ENCODE measurements at regions of chr7 and their contacts with region 1.

Region 1: GRCh38 chr7:148972375-148972774 is 55.9 kb downstream of the PDIA4 start:
- DNase-seq: no peak
- H3K4me3 ChIP-seq: no peak overlapping the region
- H3K27ac ChIP-seq: no peak overlapping the region
- H3K4me1 ChIP-seq: no peaks in the 10 kb centered on the region
- H3K27me3 ChIP-seq: no peaks in the 10 kb centered on the region
- CTCF ChIP-seq: no peak
- EP300 ChIP-seq: no peak
- POLR2A ChIP-seq: no peak

Region 2: GRCh38 chr7:148447221-148447849 is 525.0 kb before region 1 on chr7:
- in situ Hi-C with region 1: no loop called
- intact Hi-C with region 1: no loop called
- DNase-seq: no peak
- H3K4me3 ChIP-seq: no peak overlapping the region
- H3K27ac ChIP-seq: peak overlapping the region; percentile 56 to 65 (median 62)
- H3K4me1 ChIP-seq: peaks cover 0 to 25% (median 11%) of the 10 kb centered on the region in 4 donors
- H3K27me3 ChIP-seq: no peaks in the 10 kb centered on the region
- CTCF ChIP-seq: no peak
- EP300 ChIP-seq: no peak
- POLR2A ChIP-seq: no peak

Region 3: DNA sequence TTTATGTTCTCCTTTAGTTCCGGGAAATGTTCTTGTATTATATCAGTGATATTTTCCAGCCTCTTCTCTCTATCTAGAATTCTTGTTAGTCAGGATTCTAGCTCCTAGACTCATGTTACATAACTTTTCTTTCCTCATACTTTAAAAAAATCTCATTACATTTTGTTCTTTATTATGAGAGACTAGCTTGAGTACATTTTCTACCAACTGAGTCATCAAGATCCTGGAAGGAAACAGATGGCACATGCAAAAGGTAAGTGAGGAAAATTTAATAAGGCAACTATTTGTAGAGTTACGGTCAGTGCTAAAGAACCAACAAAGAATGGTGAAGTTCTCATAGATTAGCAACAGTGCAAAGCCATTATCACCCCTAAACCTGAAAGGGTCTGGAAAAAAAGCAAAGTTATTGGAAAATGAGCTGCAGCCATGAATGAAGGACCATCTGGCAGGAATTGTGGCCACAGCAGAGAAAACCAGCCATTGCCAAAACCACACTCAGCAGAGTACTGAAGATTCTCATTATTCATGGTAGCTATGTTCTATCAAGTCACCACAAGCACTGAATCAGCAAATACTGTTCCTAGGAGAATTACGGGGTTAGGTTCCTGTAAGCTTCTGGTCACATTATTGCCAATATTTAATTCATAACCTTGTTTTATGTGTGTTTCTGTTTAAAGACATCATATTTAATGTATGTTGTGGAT is 480.1 kb before region 1 on chr7:
- in situ Hi-C with region 1: no loop called
- intact Hi-C with region 1: loop called (anchors 5 kb)
- DNase-seq: no peak
- H3K4me3 ChIP-seq: no peak overlapping the region
- H3K27ac ChIP-seq: no peak overlapping the region
- H3K4me1 ChIP-seq: no peaks in the 10 kb centered on the region
- H3K27me3 ChIP-seq: no peaks in the 10 kb centered on the region
- CTCF ChIP-seq: no peak
- EP300 ChIP-seq: no peak
- POLR2A ChIP-seq: no peak

Region 4: DNA sequence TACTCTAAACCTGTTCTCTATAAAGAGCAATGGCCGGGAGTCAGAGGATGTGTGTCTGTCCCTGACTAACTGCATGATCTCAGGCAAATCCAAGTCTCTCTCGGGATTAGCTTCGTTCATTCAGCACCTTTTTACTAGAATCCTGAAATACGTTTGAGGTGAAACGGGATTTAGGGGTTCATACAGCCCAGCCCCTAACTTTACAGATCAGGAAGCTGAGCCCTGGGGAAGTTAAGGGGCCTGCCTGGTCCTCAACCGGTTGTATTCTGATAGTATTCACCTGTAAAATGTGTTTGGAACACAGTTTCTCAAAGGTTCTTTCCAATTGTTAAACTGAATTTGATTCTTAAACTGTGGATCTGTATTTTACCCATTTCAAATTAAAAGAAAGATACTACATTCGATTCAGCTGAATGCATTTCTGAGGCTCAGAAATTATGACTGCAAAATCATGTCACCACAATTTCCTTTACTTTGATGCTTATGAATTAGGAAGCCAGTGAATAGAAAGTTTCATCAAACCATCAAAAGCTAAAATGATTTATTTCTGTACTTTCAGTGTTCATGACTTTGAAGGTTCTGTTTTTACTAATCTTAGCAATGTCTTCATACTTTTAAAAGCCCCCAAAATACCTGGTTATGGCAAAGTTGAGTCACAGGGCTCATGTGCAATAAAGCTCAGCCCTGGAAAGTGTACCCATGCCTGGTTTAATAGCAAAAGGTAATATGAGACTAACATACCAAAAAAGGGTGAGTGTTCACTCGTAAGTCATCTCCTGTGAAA is 59.4 kb before region 1 on chr7:
- in situ Hi-C with region 1: no loop called
- intact Hi-C with region 1: no loop called
- DNase-seq: no peak
- H3K4me3 ChIP-seq: no peak overlapping the region
- H3K27ac ChIP-seq: no peak overlapping the region
- H3K4me1 ChIP-seq: no peaks in the 10 kb centered on the region
- H3K27me3 ChIP-seq: peaks cover 7% of the 10 kb centered on the region
- CTCF ChIP-seq: no peak
- EP300 ChIP-seq: no peak
- POLR2A ChIP-seq: no peak

Measured in transverse colon (tissue), 4 donors.